Naive thymus-derived CD4-positive, alpha-beta T cell (primary cell): ENCODE measurements at regions of chr11 and their contacts with region 1.

Region 1: GRCh38 chr11:1309498-1310317 is at the start of gene TOLLIP:
- DNase-seq: peak; percentile 94 to 100 (median 99)
- ATAC-seq: peak; percentile 86
- H3K4me3 ChIP-seq: peak within 1 kb of the TSS; percentile 76
- H3K4me3 Mint-ChIP-seq: peak within 1 kb of the TSS; percentile 80 to 92 (median 88)
- H3K27ac ChIP-seq: peak within 1 kb of the TSS; percentile 86
- H3K27ac Mint-ChIP-seq: peak within 1 kb of the TSS; percentile 87 to 97 (median 94)
- H3K4me1 ChIP-seq: peaks cover 31 to 35% of the 10 kb centered on the region in 2 donors
- H3K4me1 Mint-ChIP-seq: peaks cover 32 to 55% (median 43%) of the 10 kb centered on the region in 7 donors
- H3K27me3 ChIP-seq: no peaks in the 10 kb centered on the region
- H3K27me3 Mint-ChIP-seq: peaks cover 0 to 24% (median 0%) of the 10 kb centered on the region in 5 donors
- total RNA-seq, gene TOLLIP: 39.8 to 63.8 (median 48.7) TPM

Region 2: DNA sequence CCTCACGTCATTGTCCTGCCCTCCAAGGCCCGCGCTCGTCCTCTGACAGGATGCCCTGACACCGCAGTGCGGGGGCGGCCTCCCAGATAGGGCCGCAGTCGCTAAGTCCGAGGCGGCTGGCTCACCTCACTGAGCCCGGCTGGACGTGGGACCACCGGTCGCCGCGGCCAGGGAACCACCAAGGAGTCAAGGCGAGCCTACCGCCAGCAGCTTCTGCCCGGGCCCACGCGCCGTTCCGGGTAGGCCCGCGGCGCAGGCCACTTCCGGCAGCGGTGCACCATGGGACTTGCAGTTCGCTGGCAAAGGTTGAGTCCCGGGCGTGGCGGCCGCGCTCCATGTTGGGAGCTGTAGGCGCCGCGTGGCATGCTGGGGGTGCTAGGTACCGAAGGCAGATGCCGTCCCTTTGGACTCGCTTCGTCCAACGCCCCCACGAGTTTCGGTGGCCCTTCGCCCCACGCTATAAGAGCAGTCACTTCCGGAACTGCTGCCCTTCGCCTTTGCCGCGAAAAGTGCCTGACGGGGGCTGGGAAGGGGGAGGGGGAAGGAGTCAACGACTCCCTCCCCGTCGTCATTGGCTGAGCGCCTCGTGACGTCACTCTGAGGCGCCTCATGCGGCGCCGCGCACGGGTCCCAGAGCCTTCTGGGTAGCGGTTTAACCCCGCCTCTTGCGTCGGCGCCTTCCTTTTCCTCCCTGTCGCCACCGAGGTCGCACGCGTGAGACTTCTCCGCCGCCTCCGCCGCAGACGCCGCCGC is 500.2 kb before region 1 on chr11 and contains the start of gene RPLP2:
- CTCF ChIA-PET with region 1: no interaction called
- POLR2A ChIA-PET with region 1: no interaction called
- intact Hi-C with region 1: loop called in 1 of 2 experiments (anchors 1 kb)
- DNase-seq: peak; percentile 95 to 99 (median 98)
- ATAC-seq: peak; percentile 90
- H3K4me3 ChIP-seq: peak within 1 kb of the TSS; percentile 96
- H3K4me3 Mint-ChIP-seq: peak within 1 kb of the TSS; percentile 88 to 96 (median 95)
- H3K27ac ChIP-seq: peak within 1 kb of the TSS; percentile 96
- H3K27ac Mint-ChIP-seq: peak within 1 kb of the TSS; percentile 91 to 99 (median 97)
- H3K4me1 ChIP-seq: peaks cover 24 to 26% of the 10 kb centered on the region in 2 donors
- H3K4me1 Mint-ChIP-seq: peaks cover 8 to 51% (median 32%) of the 10 kb centered on the region in 7 donors
- H3K27me3 ChIP-seq: no peaks in the 10 kb centered on the region
- H3K27me3 Mint-ChIP-seq: no peaks in the 10 kb centered on the region
- total RNA-seq, gene RPLP2: 2,266 to 5,944 (median 5,497) TPM

Region 3: DNA sequence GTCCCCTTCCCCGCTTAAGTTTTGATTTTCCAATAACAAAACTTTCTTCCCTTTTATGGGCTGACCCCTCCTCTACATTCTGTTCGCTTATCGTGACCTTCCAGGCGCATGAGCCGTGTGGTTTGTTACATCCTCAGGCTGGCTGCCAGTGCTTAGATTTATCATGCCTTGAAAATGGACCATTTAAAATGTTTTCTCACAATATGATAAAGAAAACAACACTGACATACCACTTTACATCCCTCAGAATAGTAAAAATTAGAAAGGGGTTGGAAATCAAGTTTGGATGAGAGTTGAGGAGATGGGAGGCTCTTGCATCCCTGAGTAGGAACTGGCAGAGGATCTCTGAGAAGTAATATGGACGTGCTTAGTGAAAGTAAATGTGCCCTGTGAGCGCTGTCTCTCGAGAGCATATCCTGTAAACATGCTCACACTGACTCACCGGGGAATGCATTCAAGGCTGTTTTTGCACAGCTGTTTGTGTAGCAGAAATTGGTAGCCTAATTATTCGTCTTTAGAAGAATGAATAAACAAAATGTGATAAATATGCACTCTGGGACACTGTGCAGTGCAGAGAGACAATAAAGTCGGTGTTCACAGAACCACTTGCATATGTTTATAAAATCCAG is 16.8 kb after region 1 on chr11:
- CTCF ChIA-PET with region 1: no interaction called
- POLR2A ChIA-PET with region 1: interaction called, 10 read pairs
- intact Hi-C with region 1: no loop called
- DNase-seq: no peak
- ATAC-seq: no peak
- H3K4me3 ChIP-seq: no peak overlapping the region
- H3K4me3 Mint-ChIP-seq: peak overlapping the region in 1 of 10 donors; percentile 4
- H3K27ac ChIP-seq: no peak overlapping the region
- H3K27ac Mint-ChIP-seq: no peak overlapping the region
- H3K4me1 ChIP-seq: no peaks in the 10 kb centered on the region
- H3K4me1 Mint-ChIP-seq: peaks cover 0 to 6% (median 0%) of the 10 kb centered on the region in 7 donors
- H3K27me3 ChIP-seq: no peaks in the 10 kb centered on the region
- H3K27me3 Mint-ChIP-seq: peaks cover 12 to 22% (median 17%) of the 10 kb centered on the region in 5 donors

Region 4: DNA sequence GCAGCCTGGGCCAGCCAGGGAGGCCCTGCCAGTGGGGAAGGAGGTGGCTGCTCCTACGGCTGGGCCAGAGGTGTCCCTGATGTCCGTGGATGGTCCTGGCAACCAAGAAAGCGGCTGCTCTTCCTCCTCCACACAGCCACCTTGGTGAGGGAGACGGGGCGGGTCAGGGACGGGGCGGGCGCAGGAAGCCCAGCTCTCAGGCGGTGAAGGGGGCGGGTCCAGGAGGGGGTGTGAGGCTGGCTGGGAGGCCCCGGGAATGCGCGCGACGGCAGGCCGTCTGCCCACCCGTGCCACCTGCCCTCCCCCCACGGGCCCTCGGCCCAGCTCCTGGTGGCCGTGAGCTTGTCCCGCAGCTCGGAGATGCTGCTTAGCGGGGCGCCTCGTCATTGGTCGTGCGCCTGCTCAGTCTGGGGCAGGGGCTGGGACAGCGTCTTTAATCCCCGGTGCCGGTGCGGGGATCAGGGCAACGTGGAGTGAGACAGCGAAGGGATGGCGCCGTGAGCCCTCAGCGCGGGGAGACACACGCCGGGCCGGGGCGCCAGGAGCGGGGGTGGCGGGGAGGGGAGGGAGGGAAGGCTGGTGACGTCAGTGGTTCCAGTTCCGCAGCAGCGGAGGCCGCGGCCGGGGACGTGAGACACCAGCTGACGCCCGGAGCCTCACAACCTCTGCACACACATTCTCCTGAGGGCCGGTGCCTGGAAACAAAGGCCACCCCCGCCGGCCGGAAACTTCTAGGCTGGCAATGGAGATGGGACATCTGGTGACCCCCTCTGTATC is 73.3 kb after region 1 on chr11:
- CTCF ChIA-PET with region 1: interaction called, 3 read pairs
- POLR2A ChIA-PET with region 1: interaction called, 8 read pairs
- intact Hi-C with region 1: loop called in 1 of 2 experiments (anchors 1 kb)
- DNase-seq: peak; percentile 51 to 81 (median 60)
- ATAC-seq: peak; percentile 87
- H3K4me3 ChIP-seq: peak overlapping the region; percentile 71
- H3K4me3 Mint-ChIP-seq: peak overlapping the region; percentile 61 to 87 (median 77)
- H3K27ac ChIP-seq: peak overlapping the region; percentile 88
- H3K27ac Mint-ChIP-seq: peak overlapping the region; percentile 21 to 90 (median 74)
- H3K4me1 ChIP-seq: no peaks in the 10 kb centered on the region
- H3K4me1 Mint-ChIP-seq: peaks cover 0 to 13% (median 9%) of the 10 kb centered on the region in 7 donors
- H3K27me3 ChIP-seq: no peaks in the 10 kb centered on the region
- H3K27me3 Mint-ChIP-seq: peaks cover 0 to 28% (median 0%) of the 10 kb centered on the region in 5 donors

Region 5: GRCh38 chr11:3057069-3057963 is 1747.6 kb after region 1 on chr11 and contains the start of gene CARS1:
- CTCF ChIA-PET with region 1: no interaction called
- POLR2A ChIA-PET with region 1: no interaction called
- intact Hi-C with region 1: loop called in 1 of 2 experiments (anchors 5 kb)
- DNase-seq: peak; percentile 82 to 93 (median 89)
- ATAC-seq: peak; percentile 99
- H3K4me3 ChIP-seq: peak within 1 kb of the TSS; percentile 85
- H3K4me3 Mint-ChIP-seq: peak within 1 kb of the TSS; percentile 86 to 95 (median 89)
- H3K27ac ChIP-seq: peak within 1 kb of the TSS; percentile 91
- H3K27ac Mint-ChIP-seq: peak within 1 kb of the TSS; percentile 44 to 89 (median 87)
- H3K4me1 ChIP-seq: peaks cover 14% of the 10 kb centered on the region in 2 donors
- H3K4me1 Mint-ChIP-seq: peaks cover 25 to 42% (median 39%) of the 10 kb centered on the region in 7 donors
- H3K27me3 ChIP-seq: no peaks in the 10 kb centered on the region
- H3K27me3 Mint-ChIP-seq: no peaks in the 10 kb centered on the region
- total RNA-seq, gene CARS1: 27.8 to 70.4 (median 53.7) TPM